ENCODE measurements at regions of chr10 and their contacts with region 1.

Region 1: DNA sequence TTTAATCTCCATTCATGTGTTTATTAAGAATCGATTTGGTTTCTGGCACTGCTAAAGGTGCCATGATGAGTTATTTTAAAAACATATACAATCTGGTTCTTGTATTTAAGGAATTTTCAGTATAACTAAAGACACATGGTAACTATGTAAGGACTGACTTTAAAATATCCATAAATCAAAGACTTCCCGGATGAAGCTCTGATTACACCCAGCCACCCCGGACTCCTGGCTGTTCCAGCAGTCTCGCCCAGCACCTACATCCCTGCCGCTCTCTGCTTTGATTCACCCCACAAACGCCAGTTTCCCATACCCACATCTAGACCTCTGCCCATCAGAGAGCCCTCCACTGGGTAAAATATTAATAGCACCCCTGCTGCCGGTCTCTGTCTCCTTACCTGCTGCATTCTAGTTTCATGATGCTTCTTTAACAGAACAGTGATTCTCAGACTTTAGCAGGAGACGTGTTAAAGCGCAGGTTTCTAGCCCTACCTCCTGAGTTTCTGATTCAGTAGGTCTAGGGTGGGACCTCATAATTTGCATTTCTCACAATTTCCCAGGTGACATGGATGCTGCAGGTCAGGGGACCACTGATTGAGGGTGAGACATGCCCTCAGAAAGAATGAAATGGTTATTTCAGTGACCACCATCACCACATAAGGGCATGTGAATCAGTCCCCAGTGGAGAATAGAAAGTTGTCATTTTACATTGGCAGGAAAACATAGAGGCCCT is 185.7 kb downstream of the KIAA1217 start:
- DNase-seq: no peak
- H3K4me3 ChIP-seq: no peak overlapping the region
- H3K27ac ChIP-seq: peak overlapping the region; percentile 100
- H3K4me1 ChIP-seq: peaks cover 50% of the 10 kb centered on the region
- H3K27me3 ChIP-seq: no peaks in the 10 kb centered on the region
- CTCF ChIP-seq: 0 out of 2 replicates have a peak, but pooled peaks have one; percentile 12

Region 2: DNA sequence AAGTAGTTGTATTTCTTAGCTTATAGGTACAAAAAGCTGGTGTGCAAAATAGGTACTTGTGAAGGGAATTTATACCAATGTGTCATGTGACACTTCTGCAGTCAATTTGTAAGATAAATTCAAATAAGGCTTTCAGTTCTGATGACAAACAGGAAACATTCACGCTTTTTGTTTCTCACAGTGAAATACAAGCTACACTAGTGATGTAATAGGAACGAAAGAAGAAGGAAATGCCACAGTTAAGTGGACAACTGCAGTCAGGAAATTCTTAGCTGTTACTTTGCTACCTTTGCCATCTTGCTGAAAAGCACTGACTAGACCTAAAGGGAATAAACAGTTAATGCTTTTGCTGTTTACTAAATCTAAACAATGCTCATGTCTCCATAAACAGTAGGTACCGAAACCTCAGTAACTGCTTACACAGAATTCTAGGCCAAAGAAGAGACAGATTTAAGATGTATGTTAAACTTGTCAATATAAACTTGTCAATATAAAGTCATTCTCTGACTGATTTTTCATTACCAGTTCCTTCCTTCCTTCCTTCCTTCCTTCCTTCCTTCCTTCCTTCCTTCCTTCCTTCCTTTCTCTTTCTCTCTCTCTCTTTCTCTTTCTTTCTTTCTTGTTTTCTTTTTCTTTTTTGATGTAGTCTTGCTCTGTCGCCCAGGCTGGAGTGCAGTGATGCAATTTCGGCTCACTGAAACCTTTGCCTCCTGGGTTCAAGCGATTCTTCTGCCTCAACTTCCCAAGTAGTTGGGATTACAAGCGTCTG is 945.6 kb before region 1 on chr10:
- CTCF ChIA-PET with region 1: no interaction called
- POLR2A ChIA-PET with region 1: no interaction called
- intact Hi-C with region 1: loop called (anchors 1 kb)
- DNase-seq: peak; percentile 90
- H3K4me3 ChIP-seq: no peak overlapping the region
- H3K27ac ChIP-seq: peak overlapping the region; percentile 95
- H3K4me1 ChIP-seq: peaks cover 32% of the 10 kb centered on the region
- H3K27me3 ChIP-seq: no peaks in the 10 kb centered on the region
- CTCF ChIP-seq: no peak

Region 3: DNA sequence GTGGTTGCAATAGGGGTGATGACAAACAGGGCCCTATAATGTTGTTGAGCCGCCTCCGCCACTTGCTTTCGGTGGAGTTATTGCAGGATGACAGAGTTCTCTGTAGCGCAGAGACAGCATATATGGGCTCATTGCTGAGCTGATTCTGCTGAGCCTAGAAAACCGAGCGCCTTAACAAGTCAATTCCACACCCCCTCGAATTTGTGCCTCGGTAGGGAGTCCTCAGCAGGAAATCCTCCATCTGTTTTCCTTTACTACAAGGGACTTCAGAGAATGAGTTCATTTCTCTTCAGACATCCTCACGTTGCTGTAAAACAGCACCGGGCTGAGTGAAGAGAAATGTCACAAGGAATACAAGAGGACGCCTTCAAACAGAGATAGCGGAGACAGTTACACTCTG is 276.4 kb before region 1 on chr10:
- CTCF ChIA-PET with region 1: no interaction called
- POLR2A ChIA-PET with region 1: no interaction called
- intact Hi-C with region 1: loop called (anchors 2 kb)
- DNase-seq: peak; percentile 97
- H3K4me3 ChIP-seq: peak overlapping the region; percentile 38
- H3K27ac ChIP-seq: peak overlapping the region; percentile 81
- H3K4me1 ChIP-seq: peaks cover 60% of the 10 kb centered on the region
- H3K27me3 ChIP-seq: no peaks in the 10 kb centered on the region
- CTCF ChIP-seq: no peak

Region 4: GRCh38 chr10:24262931-24263590 is 131.6 kb before region 1 on chr10:
- CTCF ChIA-PET with region 1: no interaction called
- POLR2A ChIA-PET with region 1: no interaction called
- intact Hi-C with region 1: no loop called
- DNase-seq: no peak
- H3K4me3 ChIP-seq: no peak overlapping the region
- H3K27ac ChIP-seq: no peak overlapping the region
- H3K4me1 ChIP-seq: no peaks in the 10 kb centered on the region
- H3K27me3 ChIP-seq: no peaks in the 10 kb centered on the region
- CTCF ChIP-seq: no peak

Region 5: GRCh38 chr10:24465891-24466818 is 71.5 kb after region 1 on chr10:
- CTCF ChIA-PET with region 1: no interaction called
- POLR2A ChIA-PET with region 1: no interaction called
- intact Hi-C with region 1: loop called (anchors 5 kb)
- DNase-seq: peak; percentile 80
- H3K4me3 ChIP-seq: peak overlapping the region; percentile 46
- H3K27ac ChIP-seq: peak overlapping the region; percentile 88
- H3K4me1 ChIP-seq: peaks cover 65% of the 10 kb centered on the region
- H3K27me3 ChIP-seq: no peaks in the 10 kb centered on the region
- CTCF ChIP-seq: no peak

Region 6: DNA sequence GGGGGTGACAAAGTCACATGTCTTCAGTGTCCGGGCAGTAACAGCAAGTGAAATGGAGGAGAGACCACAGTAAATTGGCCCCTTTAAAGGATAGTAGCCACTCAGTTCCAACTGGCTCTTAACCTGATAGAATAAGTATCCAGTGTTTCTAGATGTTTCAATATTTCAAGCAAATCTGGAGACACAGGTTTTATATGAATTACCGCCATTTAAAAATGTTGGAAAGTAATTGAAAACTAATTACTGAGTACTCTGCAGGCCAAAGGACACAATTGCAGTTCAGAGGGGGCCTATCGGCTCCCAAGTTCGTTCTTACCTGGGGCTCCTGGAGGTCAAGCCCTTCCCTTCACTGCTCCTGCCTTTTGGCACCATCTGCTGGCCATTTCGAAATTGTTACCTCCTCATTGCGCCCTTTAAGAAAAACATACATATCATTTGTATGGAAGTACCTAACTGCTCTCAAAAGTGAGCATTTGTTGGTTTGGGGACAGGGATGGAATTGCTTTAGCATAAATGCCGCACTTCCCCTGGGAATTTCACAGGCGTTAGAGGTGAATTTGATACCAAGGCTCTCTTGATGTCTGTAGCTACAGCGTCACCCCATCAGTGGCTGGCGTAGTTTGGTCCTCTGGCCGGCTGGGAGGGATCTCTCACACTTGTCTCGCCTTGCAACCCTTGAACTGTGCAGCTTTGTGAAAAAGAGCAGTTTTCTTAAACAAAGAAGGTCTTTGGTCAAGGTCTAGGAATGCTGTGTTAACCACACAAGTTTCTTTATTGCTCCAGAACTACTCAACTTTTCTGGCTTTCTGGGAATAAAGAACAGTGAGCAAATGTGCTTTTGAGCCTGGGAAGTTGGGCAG is 109.1 kb after region 1 on chr10:
- CTCF ChIA-PET with region 1: interaction called, 3 read pairs
- POLR2A ChIA-PET with region 1: interaction called, 3 read pairs
- intact Hi-C with region 1: loop called (anchors 2 kb)
- DNase-seq: peak; percentile 84
- H3K4me3 ChIP-seq: no peak overlapping the region
- H3K27ac ChIP-seq: peak overlapping the region; percentile 84
- H3K4me1 ChIP-seq: peaks cover 61% of the 10 kb centered on the region
- H3K27me3 ChIP-seq: no peaks in the 10 kb centered on the region
- CTCF ChIP-seq: peak; percentile 82

Region 7: GRCh38 chr10:24513155-24513554 is 118.5 kb after region 1 on chr10:
- CTCF ChIA-PET with region 1: interaction called, 3 read pairs
- POLR2A ChIA-PET with region 1: no interaction called
- intact Hi-C with region 1: loop called (anchors 1 kb)
- DNase-seq: peak; percentile 91
- H3K4me3 ChIP-seq: no peak overlapping the region
- H3K27ac ChIP-seq: peak overlapping the region; percentile 55
- H3K4me1 ChIP-seq: peaks cover 36% of the 10 kb centered on the region
- H3K27me3 ChIP-seq: no peaks in the 10 kb centered on the region
- CTCF ChIP-seq: peak; percentile 83

Region 8: GRCh38 chr10:24556750-24557742 is 162.4 kb after region 1 on chr10:
- CTCF ChIA-PET with region 1: interaction called, 3 read pairs
- POLR2A ChIA-PET with region 1: no interaction called
- intact Hi-C with region 1: loop called (anchors 2 kb)
- DNase-seq: peak; percentile 85
- H3K4me3 ChIP-seq: no peak overlapping the region
- H3K27ac ChIP-seq: no peak overlapping the region
- H3K4me1 ChIP-seq: peaks cover 11% of the 10 kb centered on the region
- H3K27me3 ChIP-seq: no peaks in the 10 kb centered on the region
- CTCF ChIP-seq: peak; percentile 81